H1 (cell line): ENCODE measurements at regions of chr2 and their contacts with region 1.

Region 1: GRCh38 chr2:235595422-235596010 is 101.7 kb downstream of the AGAP1 start:
- DNase-seq: peak; percentile 50 to 85
- H3K4me3 ChIP-seq: no peak overlapping the region
- H3K27ac ChIP-seq: no peak overlapping the region
- H3K4me1 ChIP-seq: peaks cover 0 to 4% (median 0%) of the 10 kb centered on the region in 4 experiments; a peak in 1 of 7 replicates
- H3K27me3 ChIP-seq: no peaks in the 10 kb centered on the region
- CTCF ChIP-seq: peak; percentile 77 to 92 (median 83)
- EP300 ChIP-seq: no peak
- POLR2A ChIP-seq: no peak
- RAD21 ChIP-seq: peak; percentile 82 to 84

Region 2: GRCh38 chr2:235141411-235142128 is 453.9 kb before region 1 on chr2:
- CTCF ChIA-PET with region 1: interaction called, 46 read pairs
- POLR2A ChIA-PET with region 1: no interaction called
- DNase-seq: peak in 1 of 2 experiments; percentile 19
- H3K4me3 ChIP-seq: no peak overlapping the region
- H3K27ac ChIP-seq: no peak overlapping the region
- H3K4me1 ChIP-seq: no peaks in the 10 kb centered on the region; a peak in 1 of 7 replicates
- H3K27me3 ChIP-seq: peaks cover 0 to 3% (median 0%) of the 10 kb centered on the region in 4 experiments; a peak in 2 of 7 replicates
- CTCF ChIP-seq: no peak
- EP300 ChIP-seq: no peak
- POLR2A ChIP-seq: no peak
- RAD21 ChIP-seq: no peak

Region 3: DNA sequence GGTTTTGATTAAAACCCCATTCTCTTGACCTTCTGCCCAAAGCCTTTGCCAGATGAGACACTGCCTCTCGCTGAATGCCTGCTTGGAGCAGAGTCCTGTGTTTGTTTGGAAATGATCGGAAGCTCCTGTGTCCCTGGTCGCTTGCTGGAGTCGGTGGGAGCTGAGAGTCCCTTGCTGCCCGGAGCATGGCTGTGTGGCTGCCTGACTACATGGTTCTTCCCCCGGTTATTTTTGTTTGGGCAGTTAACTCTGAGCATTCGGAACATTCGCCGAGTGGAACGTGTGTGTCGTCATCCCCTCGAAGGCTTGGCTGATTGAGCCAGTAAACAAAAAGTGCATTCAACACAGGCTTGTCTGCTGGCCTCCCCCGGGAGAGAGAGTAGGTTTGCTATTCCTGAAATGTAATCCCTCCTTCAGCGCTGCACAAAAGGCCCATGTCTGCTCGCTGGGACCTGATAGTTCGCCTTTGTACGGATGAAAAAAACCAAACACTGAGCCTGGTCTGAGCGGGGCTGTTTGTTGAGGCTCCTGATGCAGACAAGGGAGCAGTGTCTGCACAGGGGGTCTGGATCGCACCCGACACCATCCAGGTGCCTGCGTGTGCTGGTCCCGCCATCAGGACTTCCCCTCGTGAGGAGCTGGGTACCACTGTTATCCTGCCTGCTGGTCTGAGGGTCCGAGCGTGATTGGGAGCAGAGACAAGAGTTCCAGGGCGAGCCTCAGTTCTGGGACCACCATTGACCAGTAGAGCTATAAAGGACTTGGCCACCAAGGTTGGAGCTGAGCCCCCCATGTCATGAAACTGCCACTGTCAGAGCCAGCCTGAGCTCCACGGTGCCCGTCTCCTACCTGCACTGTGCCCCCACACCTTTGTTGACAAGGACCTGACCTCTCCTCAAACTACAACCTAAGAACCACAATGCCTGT is 17.8 kb before region 1 on chr2:
- CTCF ChIA-PET with region 1: interaction called, 49 read pairs
- POLR2A ChIA-PET with region 1: interaction called, 3 read pairs
- DNase-seq: no peak
- H3K4me3 ChIP-seq: no peak overlapping the region
- H3K27ac ChIP-seq: no peak overlapping the region
- H3K4me1 ChIP-seq: peaks cover 2 to 30% (median 11%) of the 10 kb centered on the region in 4 experiments
- H3K27me3 ChIP-seq: no peaks in the 10 kb centered on the region
- CTCF ChIP-seq: no peak
- EP300 ChIP-seq: no peak
- POLR2A ChIP-seq: no peak
- RAD21 ChIP-seq: no peak

Region 4: DNA sequence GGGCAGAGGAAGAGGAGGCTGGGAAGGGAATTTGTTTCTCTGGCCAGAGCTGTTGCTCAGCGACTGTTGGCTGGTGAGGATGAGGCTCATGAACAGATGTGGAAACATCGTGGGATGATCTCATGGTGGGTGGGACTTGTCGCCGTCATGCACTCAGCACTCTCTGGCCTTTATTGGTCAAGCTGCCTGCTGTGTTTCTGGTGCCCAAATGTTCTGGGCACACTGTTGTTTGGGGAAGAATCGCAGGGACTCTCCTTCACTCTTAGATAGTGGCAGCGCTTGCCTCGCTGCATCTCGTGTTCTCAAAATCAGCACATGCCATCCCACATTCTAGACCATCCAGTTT is 43.9 kb after region 1 on chr2:
- CTCF ChIA-PET with region 1: interaction called, 26 read pairs
- POLR2A ChIA-PET with region 1: no interaction called
- DNase-seq: no peak
- H3K4me3 ChIP-seq: no peak overlapping the region
- H3K27ac ChIP-seq: no peak overlapping the region
- H3K4me1 ChIP-seq: peaks cover 5 to 17% (median 12%) of the 10 kb centered on the region in 4 experiments; a peak in 6 of 7 replicates
- H3K27me3 ChIP-seq: no peaks in the 10 kb centered on the region
- CTCF ChIP-seq: no peak
- EP300 ChIP-seq: no peak
- POLR2A ChIP-seq: no peak
- RAD21 ChIP-seq: no peak

Region 5: DNA sequence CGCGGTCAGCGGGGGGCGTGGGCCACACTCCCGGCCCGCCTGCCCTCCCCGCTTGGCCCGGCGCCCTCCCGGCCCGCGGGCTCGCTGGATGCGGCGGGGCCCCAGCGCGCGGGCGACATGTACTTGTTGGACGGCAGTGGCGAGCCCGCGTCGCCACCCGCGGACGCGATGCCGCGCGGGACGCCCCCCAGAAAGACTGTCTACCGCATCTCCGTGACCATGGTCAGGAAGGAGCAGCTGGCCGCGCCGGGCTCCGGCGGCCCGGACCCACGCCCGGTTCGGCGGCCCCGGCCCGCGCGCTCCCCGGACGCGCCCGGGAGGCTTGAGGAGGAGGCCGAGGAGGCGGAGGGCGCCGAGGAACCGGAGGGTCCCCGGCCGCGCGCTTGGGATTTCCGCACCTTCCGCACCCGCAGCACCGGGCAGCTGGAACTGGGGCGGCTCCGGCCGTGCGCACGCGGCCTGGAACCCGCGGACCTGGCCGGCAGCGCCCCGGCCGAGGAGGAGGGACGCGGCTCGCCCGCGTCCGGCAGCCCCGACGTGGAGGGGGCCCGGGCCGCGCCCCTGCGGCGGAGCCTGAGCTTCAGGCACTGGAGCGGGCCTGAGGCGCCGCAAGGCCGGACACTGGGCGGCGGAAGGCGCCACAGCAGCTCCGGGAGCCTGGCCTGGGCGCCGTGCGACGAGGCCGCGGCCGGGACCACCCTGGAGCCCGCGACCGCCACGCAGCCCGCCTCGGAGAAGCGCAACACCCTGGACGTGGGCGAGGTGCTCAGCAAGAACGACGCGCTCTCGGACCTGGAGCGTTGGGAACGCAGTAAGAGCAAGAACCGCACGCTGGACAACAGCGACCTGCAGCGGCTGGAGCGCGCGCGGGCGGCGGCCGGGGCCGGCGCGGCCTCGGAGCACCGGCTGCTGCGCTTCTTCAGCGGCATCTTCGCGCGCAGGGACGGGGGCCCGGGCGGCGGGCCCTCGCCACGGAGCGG is 74.8 kb after region 1 on chr2:
- CTCF ChIA-PET with region 1: interaction called, 55 read pairs
- POLR2A ChIA-PET with region 1: interaction called, 4 read pairs
- DNase-seq: peak in 1 of 2 experiments; percentile 78
- H3K4me3 ChIP-seq: peak overlapping the region; percentile 44 to 64 (median 56)
- H3K27ac ChIP-seq: no peak overlapping the region
- H3K4me1 ChIP-seq: peaks cover 7 to 33% (median 26%) of the 10 kb centered on the region in 4 experiments
- H3K27me3 ChIP-seq: peaks cover 0 to 7% (median 3%) of the 10 kb centered on the region in 4 experiments; a peak in 4 of 7 replicates
- CTCF ChIP-seq: peak; percentile 58 to 78 (median 67)
- EP300 ChIP-seq: no peak
- POLR2A ChIP-seq: no peak
- RAD21 ChIP-seq: peak; percentile 65 to 84

Region 6: DNA sequence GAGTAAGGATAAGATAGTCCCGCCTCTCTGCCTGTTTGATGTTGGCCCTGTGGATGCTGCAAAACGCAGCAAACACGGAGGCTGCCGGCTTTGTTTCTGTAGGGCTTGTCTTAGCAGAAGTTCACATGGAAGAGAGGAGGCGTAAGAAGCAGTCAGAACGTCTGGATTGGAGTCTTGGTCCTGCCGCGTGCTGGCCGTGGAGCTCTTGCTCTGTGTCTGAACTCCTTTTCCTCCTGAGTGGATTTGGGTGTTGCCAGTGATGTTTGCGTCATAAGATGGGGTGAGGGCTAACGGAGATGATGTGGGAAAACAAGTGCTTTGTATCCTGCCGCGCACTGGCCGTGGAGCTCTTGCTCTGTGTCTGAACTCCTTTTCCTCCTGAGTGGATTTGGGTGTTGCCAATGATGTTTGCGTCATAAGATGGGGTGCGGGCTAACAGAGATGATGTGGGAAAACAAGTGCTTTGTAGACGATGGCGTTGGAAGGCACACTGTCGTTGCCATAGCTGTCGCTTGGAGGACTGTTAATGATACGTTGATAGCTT is 139.2 kb after region 1 on chr2:
- CTCF ChIA-PET with region 1: interaction called, 111 read pairs
- POLR2A ChIA-PET with region 1: no interaction called
- DNase-seq: no peak
- H3K4me3 ChIP-seq: no peak overlapping the region
- H3K27ac ChIP-seq: no peak overlapping the region
- H3K4me1 ChIP-seq: peaks cover 0 to 8% (median 7%) of the 10 kb centered on the region in 4 experiments; a peak in 5 of 7 replicates
- H3K27me3 ChIP-seq: no peaks in the 10 kb centered on the region
- CTCF ChIP-seq: no peak
- EP300 ChIP-seq: no peak
- POLR2A ChIP-seq: no peak
- RAD21 ChIP-seq: no peak